Activated CD4-positive, alpha-beta memory T cell treated with anti-CD3 and anti-CD28 coated beads, Interleukin-2, amount 10 ng/mL, durations not matched to agents 7 days and 5 days (primary cell): ENCODE measurements at regions of chr11 and their contacts with region 1.

Region 1: GRCh38 chr11:85647604-85648299 is at the start of gene TMEM126A:
- DNase-seq: peak; percentile 93
- H3K4me3 Mint-ChIP-seq: peak within 1 kb of the TSS; percentile 92
- H3K27ac Mint-ChIP-seq: peak within 1 kb of the TSS; percentile 91
- H3K4me1 Mint-ChIP-seq: peaks cover 36% of the 10 kb centered on the region
- H3K27me3 Mint-ChIP-seq: peaks cover 16% of the 10 kb centered on the region
- total RNA-seq, gene TMEM126A: 31.8 to 35.6 TPM

Region 2: GRCh38 chr11:85582111-85582510 is 65.6 kb before region 1 on chr11:
- CTCF ChIA-PET with region 1: no interaction called
- POLR2A ChIA-PET with region 1: no interaction called
- DNase-seq: no peak
- H3K4me3 Mint-ChIP-seq: no peak overlapping the region
- H3K27ac Mint-ChIP-seq: no peak overlapping the region
- H3K4me1 Mint-ChIP-seq: peaks cover 3% of the 10 kb centered on the region
- H3K27me3 Mint-ChIP-seq: peaks cover 20% of the 10 kb centered on the region

Region 3: DNA sequence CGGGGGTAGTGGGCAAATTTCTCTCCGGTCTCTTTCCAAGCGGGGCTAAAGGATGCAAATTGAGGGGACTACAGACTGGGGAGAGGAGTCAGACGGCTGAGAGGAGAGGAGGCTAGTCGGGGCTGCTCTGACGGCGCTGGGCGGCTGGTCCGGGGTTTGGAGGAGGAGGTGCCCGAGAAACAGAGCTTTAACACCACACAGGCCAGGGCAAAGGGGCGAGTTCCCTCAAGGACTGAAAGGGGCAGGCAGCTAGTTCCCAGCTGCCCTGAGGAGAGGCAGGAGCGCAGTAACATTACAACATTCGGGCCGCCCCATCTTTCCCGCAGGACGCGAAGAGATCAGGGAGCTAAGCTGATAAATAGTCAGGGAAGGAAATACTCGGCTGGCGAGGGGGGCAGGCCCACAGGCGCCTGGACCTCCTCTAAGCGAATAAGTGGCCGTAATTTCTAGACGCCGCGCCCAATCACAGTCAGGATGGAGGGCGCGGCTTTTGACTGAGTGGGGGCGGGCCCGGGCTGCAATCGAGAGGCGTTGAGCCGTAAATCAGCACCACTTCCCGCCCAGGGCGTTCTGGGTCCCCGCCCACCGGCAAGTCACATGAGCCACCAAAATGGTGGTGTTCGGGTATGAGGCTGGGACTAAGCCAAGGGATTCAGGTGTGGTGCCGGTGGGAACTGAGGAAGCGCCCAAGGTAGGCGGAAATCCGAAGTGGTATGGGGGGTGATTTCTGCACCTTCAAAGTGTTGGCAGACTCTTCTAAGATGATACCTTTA is 19.6 kb before region 1 on chr11 and contains the start of gene TMEM126B:
- CTCF ChIA-PET with region 1: interaction called, 12 read pairs
- POLR2A ChIA-PET with region 1: interaction called, 88 read pairs
- DNase-seq: peak; percentile 97
- H3K4me3 Mint-ChIP-seq: peak within 1 kb of the TSS; percentile 94
- H3K27ac Mint-ChIP-seq: peak within 1 kb of the TSS; percentile 88
- H3K4me1 Mint-ChIP-seq: peaks cover 42% of the 10 kb centered on the region
- H3K27me3 Mint-ChIP-seq: peaks cover 2% of the 10 kb centered on the region
- total RNA-seq, gene TMEM126B: 48.8 to 50.3 TPM

Region 4: GRCh38 chr11:85844426-85845129 is 196.8 kb after region 1 on chr11:
- CTCF ChIA-PET with region 1: no interaction called
- POLR2A ChIA-PET with region 1: no interaction called
- DNase-seq: no peak
- H3K4me3 Mint-ChIP-seq: no peak overlapping the region
- H3K27ac Mint-ChIP-seq: no peak overlapping the region
- H3K4me1 Mint-ChIP-seq: peaks cover 15% of the 10 kb centered on the region
- H3K27me3 Mint-ChIP-seq: peaks cover 4% of the 10 kb centered on the region

Region 5: DNA sequence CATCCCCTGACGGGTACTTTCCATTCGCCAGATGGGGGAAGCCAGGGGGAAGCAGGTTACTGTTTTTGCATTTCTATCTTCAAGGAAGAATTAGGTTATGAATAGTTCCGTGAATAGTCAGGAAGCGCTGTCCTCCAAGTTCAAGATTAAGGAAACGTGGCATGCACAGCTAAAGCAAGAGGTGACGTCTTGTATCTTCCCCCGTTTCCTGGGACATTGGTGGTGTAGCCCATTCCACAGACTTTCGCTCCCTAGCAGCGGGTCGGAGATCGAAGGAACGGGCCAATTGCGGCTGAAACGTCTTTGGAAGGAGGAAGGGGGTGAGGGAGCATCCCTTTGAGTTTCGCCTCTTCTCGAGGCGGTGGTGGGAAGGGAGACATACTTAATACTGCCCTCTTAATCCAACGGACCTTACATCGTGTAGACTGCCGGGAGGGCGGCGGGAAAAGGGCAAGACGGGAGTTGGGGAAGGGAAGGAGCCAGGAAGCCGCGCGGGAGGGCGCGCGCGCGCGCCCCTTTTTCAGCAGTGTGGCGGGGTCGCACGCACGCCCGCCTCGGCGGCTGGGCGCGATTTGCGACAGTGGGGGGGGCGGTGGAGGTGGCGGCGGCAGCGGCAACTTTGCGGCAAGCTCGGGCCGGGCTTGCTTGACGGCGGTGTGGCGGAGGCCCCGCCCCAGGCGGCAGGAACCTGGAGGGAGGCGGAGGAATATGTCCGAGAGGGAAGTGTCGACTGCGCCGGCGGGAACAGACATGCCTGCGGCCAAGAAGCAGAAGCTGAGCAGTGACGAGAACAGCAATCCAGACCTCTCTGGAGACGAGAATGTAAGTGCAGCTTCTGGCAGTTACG is 597.0 kb after region 1 on chr11 and contains the start of gene EED:
- CTCF ChIA-PET with region 1: no interaction called
- POLR2A ChIA-PET with region 1: interaction called, 10 read pairs
- DNase-seq: peak; percentile 94
- H3K4me3 Mint-ChIP-seq: no peak within 1 kb of the TSS
- H3K27ac Mint-ChIP-seq: no peak within 1 kb of the TSS
- H3K4me1 Mint-ChIP-seq: peaks cover 41% of the 10 kb centered on the region
- H3K27me3 Mint-ChIP-seq: no peaks in the 10 kb centered on the region
- total RNA-seq, gene EED: 63.9 to 66.9 TPM